Vagina (tissue), 2 donors: ENCODE measurements at regions of chr10 and their contacts with region 1.

Region 1: DNA sequence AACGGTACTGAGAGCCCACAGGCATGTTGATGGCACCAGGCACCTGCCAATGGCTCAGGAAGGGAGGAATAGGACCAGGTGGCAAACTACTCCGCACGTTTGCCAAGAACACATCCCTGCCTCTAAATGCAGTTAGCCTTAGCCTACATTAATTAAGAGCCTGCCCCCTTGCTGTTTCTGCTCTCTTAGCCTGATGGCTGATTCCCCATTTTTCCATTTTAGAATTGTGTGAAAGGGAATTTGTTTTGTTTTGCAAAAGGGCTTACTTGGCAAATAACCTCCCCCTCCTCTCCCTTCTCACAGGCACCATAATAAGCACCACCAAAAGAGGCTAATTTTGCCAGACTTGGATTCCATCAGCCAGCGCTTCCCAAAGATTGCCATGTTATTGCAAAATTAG is 1203.2 kb downstream of the SORCS3 start:
- DNase-seq: no peak
- H3K4me3 ChIP-seq: no peak overlapping the region
- H3K27ac ChIP-seq: no peak overlapping the region
- H3K4me1 ChIP-seq: no peaks in the 10 kb centered on the region
- H3K27me3 ChIP-seq: no peaks in the 10 kb centered on the region
- CTCF ChIP-seq: no peak
- POLR2A ChIP-seq: no peak

Region 2: GRCh38 chr10:106571192-106571946 is 727.1 kb after region 1 on chr10:
- intact Hi-C with region 1: loop called (anchors 10 kb)
- DNase-seq: no peak
- H3K4me3 ChIP-seq: no peak overlapping the region
- H3K27ac ChIP-seq: no peak overlapping the region
- H3K4me1 ChIP-seq: no peaks in the 10 kb centered on the region
- H3K27me3 ChIP-seq: no peaks in the 10 kb centered on the region
- CTCF ChIP-seq: no peak
- POLR2A ChIP-seq: no peak